Left ventricle myocardium inferior (tissue), 1 donor: ENCODE measurements at regions of chr10 and their contacts with region 1.

Region 1: DNA sequence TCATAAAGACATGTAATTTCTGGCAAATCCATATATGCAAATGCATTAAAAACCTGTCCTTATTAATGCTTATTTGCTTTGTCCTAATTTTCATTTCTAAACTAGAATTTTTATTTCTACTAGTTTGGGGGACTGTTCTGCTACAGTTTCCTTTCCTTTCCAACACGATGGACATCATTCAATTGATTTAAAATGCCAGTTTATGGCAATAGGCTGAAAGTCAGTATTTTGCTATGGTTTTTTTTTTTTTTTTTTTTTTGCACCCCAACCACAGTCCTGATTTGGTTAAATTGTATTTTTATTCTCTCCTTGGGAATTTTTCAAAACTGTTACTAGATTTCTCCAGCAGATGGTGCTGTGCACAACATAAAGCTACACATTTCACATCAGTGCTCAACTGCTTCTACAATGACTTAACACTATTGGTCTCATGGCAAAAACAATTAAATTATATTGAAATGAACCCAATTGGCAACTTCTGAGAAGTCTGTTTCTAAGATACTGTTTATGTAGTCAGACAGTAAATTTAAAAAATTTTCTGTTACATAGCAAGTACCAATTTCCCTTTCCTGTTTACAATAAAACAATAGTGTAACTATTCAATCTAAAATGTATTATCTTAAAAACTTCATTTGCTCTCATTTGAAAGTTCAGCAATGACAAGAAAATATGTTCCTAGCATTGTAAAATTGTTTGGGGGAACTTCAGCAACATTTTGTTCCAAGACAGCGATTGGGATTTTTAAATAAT is 193.8 kb upstream of the CCDC6 start:
- DNase-seq: no peak
- H3K4me3 ChIP-seq: no peak overlapping the region
- H3K27ac ChIP-seq: no peak overlapping the region
- H3K4me1 ChIP-seq: no peaks in the 10 kb centered on the region
- H3K27me3 ChIP-seq: no peaks in the 10 kb centered on the region
- CTCF ChIP-seq: peak; percentile 72

Region 2: GRCh38 chr10:60208676-60209269 is 108.6 kb after region 1 on chr10:
- intact Hi-C with region 1: loop called (anchors 10 kb)
- DNase-seq: no peak
- H3K4me3 ChIP-seq: no peak overlapping the region
- H3K27ac ChIP-seq: no peak overlapping the region
- H3K4me1 ChIP-seq: peaks cover 15% of the 10 kb centered on the region
- H3K27me3 ChIP-seq: no peaks in the 10 kb centered on the region
- CTCF ChIP-seq: peak; percentile 69

Region 3: DNA sequence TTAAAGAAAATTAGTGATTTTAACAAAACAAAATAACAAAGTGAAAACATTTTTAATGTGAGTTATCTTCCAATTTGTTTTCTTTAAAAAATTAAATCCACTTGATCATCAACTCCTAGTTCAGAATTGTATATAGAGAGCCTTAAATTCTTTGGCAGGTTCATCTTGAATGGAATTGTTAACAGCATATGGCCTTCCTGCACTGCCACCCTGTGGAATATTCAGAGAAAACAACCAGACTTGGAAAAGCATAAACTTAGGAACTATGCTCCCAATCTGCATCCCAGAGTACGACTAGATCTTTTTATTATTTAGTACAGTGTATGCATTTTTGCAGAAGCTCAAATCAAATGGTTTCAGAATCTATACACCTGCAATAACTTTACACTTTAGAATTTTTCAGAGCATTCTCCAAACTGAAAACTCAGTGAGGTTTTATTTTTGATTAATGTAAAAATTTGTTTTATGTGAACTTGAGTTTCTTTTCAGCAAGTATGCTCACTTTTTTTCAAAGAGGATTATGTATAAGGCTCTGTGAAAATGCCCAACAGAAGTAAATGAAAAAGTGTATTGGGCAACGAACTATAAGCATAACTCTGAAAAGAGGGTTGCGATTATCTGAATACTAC is 334.4 kb after region 1 on chr10:
- intact Hi-C with region 1: loop called (anchors 2 kb)
- DNase-seq: no peak
- H3K4me3 ChIP-seq: no peak overlapping the region
- H3K27ac ChIP-seq: no peak overlapping the region
- H3K4me1 ChIP-seq: peaks cover 18% of the 10 kb centered on the region
- H3K27me3 ChIP-seq: no peaks in the 10 kb centered on the region
- CTCF ChIP-seq: peak; percentile 74

Region 4: GRCh38 chr10:60652628-60653027 is 552.5 kb after region 1 on chr10:
- intact Hi-C with region 1: loop called (anchors 10 kb)
- DNase-seq: no peak
- H3K4me3 ChIP-seq: no peak overlapping the region
- H3K27ac ChIP-seq: no peak overlapping the region
- H3K4me1 ChIP-seq: no peaks in the 10 kb centered on the region
- H3K27me3 ChIP-seq: no peaks in the 10 kb centered on the region
- CTCF ChIP-seq: no peak